PC-9 (cell line): ENCODE measurements at regions of chr13 and their contacts with region 1.

Region 1: DNA sequence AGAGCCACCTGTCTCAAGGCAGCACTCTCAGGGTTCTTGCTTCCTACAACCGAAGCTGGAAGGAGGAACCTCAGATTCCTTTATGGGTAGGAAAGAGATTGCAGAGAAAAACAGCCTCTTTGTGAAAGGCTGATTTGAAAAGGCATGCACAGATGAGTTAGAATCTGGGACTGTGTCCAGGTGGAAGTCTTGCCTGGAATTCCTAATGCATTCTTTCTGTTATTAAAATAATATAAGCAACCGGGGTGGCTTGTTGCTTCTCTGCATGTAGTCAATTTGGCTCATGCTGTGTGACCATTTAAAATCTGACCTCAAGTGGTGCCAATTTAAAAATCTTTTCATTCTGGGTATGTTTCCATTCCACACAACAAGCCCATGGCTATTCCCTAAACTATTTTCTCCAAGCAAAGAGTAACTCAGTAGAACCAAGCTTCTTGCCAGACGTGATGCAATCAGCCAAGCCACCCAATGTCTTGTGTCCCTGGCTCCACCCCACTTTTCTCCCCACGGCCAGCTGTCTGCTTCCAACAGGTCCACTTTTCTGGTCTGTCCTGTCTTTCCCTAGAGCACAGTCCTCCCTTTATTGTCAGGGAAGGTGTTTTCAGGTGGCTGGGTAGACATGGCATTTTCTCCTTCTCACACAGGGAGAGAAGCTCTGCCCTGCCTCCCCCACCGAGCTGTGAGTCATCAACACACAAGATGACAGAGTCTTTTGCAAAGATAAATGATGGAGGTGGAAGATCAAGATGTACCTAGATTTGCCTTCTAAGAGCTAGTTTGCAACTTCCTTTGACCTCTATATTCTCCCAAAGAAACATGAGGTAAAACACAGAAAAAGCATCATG is 394.3 kb downstream of the FOXO1 start:
- DNase-seq: peak; percentile 74 to 82
- H3K4me3 ChIP-seq: no peak overlapping the region
- H3K27ac ChIP-seq: peak overlapping the region; percentile 57
- H3K4me1 ChIP-seq: peaks cover 27% of the 10 kb centered on the region
- H3K27me3 ChIP-seq: no peaks in the 10 kb centered on the region
- CTCF ChIP-seq: no peak

Region 2: GRCh38 chr13:39892721-39893685 is 379.1 kb before region 1 on chr13:
- CTCF ChIA-PET with region 1: no interaction called
- POLR2A ChIA-PET with region 1: no interaction called
- intact Hi-C with region 1: no loop called
- DNase-seq: no peak
- H3K4me3 ChIP-seq: no peak overlapping the region
- H3K27ac ChIP-seq: no peak overlapping the region
- H3K4me1 ChIP-seq: peaks cover 37% of the 10 kb centered on the region
- H3K27me3 ChIP-seq: no peaks in the 10 kb centered on the region
- CTCF ChIP-seq: no peak

Region 3: DNA sequence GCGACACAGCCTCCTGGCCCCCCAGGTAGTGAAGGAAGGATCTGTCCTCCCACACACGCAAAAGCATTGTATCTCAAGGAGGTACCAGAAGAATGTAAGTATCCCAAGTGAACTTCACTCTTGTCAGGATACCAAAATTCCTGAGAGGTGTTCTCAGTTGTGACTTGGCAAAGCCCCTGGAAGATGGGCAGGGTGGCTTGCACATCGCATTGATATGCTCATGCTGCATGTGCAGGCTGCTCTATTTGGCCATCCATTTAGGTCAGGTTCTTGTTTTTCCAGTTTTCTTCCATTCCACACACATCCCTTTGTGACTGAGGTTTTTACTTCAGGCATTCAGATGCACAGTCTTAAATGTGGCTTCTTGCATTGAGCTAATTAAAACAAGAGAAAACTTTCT is 11.5 kb after region 1 on chr13:
- CTCF ChIA-PET with region 1: no interaction called
- POLR2A ChIA-PET with region 1: no interaction called
- intact Hi-C with region 1: loop called (anchors 1 kb)
- DNase-seq: peak; percentile 55 to 81
- H3K4me3 ChIP-seq: no peak overlapping the region
- H3K27ac ChIP-seq: no peak overlapping the region
- H3K4me1 ChIP-seq: peaks cover 12% of the 10 kb centered on the region
- H3K27me3 ChIP-seq: no peaks in the 10 kb centered on the region
- CTCF ChIP-seq: no peak

Region 4: GRCh38 chr13:40371531-40372125 is 99.5 kb after region 1 on chr13:
- CTCF ChIA-PET with region 1: no interaction called
- POLR2A ChIA-PET with region 1: no interaction called
- intact Hi-C with region 1: no loop called
- DNase-seq: no peak
- H3K4me3 ChIP-seq: no peak overlapping the region
- H3K27ac ChIP-seq: no peak overlapping the region
- H3K4me1 ChIP-seq: no peaks in the 10 kb centered on the region
- H3K27me3 ChIP-seq: no peaks in the 10 kb centered on the region
- CTCF ChIP-seq: no peak

Region 5: DNA sequence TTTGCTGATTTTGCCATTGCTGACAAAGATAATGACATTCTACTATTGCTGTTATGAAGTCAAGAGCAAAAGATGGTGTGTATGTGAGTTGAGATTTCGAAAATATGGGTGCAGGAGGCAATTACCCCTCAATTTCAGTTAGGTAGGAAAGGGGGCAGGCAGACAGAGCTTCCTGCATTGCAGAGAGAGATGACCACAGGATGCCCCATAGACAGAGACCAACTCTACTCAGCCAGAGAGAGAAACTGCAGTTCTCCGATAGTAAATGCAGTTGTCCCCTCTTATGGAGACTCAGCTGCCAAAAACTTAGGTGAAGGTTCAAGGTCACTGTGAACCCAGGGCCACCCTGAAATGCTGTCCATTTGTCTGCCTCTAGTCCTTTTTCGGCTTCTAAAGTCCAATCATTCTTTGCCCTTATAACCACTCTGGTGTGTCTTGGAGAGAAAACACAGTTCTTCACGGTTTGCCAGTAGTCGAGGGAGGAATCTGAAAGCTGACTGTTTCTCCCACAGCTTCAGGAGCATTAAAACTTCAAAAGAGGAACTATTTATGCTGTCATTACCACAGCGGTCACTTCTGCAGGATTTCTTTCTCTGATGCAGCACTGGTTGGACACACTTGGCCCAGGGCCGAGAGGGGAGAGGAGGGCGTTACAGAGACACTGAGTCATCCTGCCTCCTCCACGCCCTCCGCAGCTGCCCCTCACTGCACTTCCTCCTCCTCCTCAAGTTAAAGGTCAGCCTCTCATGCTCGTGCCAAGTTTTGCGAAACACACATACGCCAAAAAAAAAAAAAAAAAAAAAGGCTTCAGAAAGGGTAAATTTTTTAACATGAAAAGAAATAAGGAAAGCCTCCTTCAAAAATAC is 130.0 kb after region 1 on chr13:
- CTCF ChIA-PET with region 1: no interaction called
- POLR2A ChIA-PET with region 1: no interaction called
- intact Hi-C with region 1: loop called (anchors 5 kb)
- DNase-seq: peak; percentile 88 to 91
- H3K4me3 ChIP-seq: peak overlapping the region; percentile 21; the same call in 1 of the 2 replicates
- H3K27ac ChIP-seq: peak overlapping the region; percentile 71
- H3K4me1 ChIP-seq: peaks cover 62% of the 10 kb centered on the region
- H3K27me3 ChIP-seq: no peaks in the 10 kb centered on the region
- CTCF ChIP-seq: no peak